ENCODE measurements at regions of chr21 and their contacts with region 1.

Region 1: DNA sequence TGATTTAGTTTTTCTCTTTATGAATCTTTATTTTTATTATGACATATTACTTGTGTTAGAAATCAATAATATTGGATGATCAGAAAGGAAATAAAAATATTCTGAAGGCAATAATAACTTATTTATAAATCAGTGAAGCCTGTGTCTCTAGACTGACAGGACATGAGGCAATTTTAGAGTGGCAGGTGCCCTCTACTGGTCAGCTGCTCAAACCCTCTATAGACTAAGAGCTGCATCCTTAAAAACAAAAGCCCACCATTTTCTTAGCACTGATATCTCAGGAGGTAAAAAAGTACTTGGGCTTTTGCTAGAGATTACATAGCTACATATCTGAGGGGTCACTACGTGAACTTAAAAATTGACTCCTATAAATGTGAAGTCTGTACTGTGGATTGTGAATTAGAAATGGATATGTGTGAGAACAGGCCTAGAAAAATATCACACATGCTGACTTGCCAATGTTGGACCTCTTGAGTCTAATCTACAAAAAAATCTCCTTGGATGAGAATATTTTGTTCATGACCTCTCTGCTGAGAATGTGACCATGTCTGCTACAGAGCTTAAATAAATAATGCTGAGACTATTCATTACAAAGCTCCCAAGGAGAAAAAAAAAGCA is 597.9 kb upstream of the ADAMTS5 start:
- DNase-seq: peak; percentile 8
- H3K4me3 Mint-ChIP-seq: no peak overlapping the region
- H3K27ac Mint-ChIP-seq: no peak overlapping the region
- H3K4me1 Mint-ChIP-seq: no peaks in the 10 kb centered on the region
- H3K27me3 Mint-ChIP-seq: no peaks in the 10 kb centered on the region

Region 2: DNA sequence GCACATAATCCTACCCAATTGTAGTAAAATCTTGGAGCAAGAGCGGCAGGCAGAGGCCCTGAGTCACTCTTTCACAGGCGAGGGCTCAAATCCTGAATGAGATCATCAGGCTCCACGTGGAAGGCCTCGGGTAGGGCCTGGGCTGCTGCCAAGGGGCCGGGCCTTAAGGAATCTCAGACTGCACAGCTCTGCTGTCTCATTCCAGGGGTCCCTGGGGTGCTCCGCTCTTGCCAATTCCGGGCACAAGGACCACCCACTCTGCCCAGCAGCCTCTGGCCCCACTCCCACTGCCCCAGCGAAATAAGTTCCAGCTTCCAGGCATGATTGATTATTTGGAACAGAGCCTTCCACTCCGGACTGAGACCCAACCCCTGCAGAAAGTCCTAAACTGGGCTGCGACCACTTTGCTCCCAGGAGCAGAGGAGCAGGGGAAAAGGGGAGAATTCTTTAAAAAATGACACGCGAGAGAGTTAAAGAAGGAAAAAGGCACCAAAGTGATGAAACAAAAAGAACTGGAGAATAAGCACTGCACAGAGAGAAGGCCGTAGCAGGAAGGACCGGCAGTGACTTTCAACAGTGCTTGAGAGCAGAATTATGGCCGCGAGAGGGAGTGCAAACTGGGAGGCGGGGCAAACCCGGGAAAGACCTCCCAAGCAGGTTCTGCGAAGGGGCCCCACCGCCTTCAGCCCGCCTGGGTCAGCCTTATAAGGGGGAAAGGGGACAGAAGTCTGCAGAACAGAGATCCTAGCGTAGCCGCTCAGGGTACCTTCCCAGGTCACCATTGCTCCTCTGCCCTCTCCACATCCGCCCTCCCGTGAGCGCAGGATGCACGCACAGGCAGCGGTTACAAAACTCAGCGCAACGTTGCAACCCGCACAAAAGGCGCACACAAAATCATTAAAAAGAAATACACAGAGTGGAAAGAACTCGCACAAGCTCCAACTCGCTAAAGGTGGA is 721.5 kb before region 1 on chr21:
- CTCF ChIA-PET with region 1: interaction called, 3 read pairs
- POLR2A ChIA-PET with region 1: no interaction called
- intact Hi-C with region 1: loop called (anchors 5 kb)
- DNase-seq: peak; percentile 29
- H3K4me3 Mint-ChIP-seq: peak overlapping the region; percentile 49
- H3K27ac Mint-ChIP-seq: no peak overlapping the region
- H3K4me1 Mint-ChIP-seq: peaks cover 28% of the 10 kb centered on the region
- H3K27me3 Mint-ChIP-seq: peaks cover 60% of the 10 kb centered on the region

Region 3: GRCh38 chr21:27590271-27590670 is 25.5 kb after region 1 on chr21:
- CTCF ChIA-PET with region 1: no interaction called
- POLR2A ChIA-PET with region 1: no interaction called
- intact Hi-C with region 1: no loop called
- DNase-seq: no peak
- H3K4me3 Mint-ChIP-seq: no peak overlapping the region
- H3K27ac Mint-ChIP-seq: no peak overlapping the region
- H3K4me1 Mint-ChIP-seq: no peaks in the 10 kb centered on the region
- H3K27me3 Mint-ChIP-seq: no peaks in the 10 kb centered on the region

Measured in activated CD4-positive, alpha-beta memory T cell treated with anti-CD3 and anti-CD28 coated beads for 36 hours (primary cell).